Mammary epithelial cell (primary cell): ENCODE measurements at regions of chr5 and their contacts with region 1.

Region 1: GRCh38 chr5:181005791-181006190 is 17.1 kb downstream of the BTNL3 start:
- DNase-seq: no peak
- H3K4me3 ChIP-seq: no peak overlapping the region
- H3K27ac ChIP-seq: no peak overlapping the region
- H3K4me1 ChIP-seq: no peaks in the 10 kb centered on the region
- H3K27me3 ChIP-seq: no peaks in the 10 kb centered on the region
- CTCF ChIP-seq: no peak

Region 2: GRCh38 chr5:180908998-180909731 is 96.6 kb before region 1 on chr5:
- CTCF ChIA-PET with region 1: no interaction called
- dilution Hi-C with region 1: no loop called
- in situ Hi-C with region 1: no loop called
- intact Hi-C with region 1: no loop called
- DNase-seq: no peak
- H3K4me3 ChIP-seq: no peak overlapping the region
- H3K27ac ChIP-seq: no peak overlapping the region
- H3K4me1 ChIP-seq: no peaks in the 10 kb centered on the region
- H3K27me3 ChIP-seq: no peaks in the 10 kb centered on the region
- CTCF ChIP-seq: no peak

Region 3: DNA sequence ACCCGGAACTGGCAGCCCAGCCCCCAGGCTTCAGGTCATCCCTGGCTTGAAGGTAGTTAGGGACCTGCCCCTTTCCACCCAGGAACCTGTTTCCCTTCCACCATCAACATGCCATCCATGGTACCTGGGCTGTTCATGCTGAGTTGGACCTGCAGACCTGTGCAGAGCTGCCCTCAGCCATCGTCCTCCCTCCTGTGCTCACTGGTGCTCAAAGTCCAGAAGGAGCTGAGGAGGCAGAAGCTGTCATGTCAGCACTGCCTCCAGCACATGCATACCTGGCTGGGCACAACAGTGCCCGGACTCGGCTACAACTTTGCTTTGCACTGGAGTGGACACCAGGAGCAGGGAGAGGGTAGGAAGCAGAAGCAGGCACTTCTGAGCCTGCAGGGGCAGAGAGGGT is 70.6 kb before region 1 on chr5:
- CTCF ChIA-PET with region 1: no interaction called
- dilution Hi-C with region 1: no loop called
- in situ Hi-C with region 1: no loop called
- intact Hi-C with region 1: no loop called
- DNase-seq: no peak
- H3K4me3 ChIP-seq: no peak overlapping the region
- H3K27ac ChIP-seq: no peak overlapping the region
- H3K4me1 ChIP-seq: no peaks in the 10 kb centered on the region
- H3K27me3 ChIP-seq: no peaks in the 10 kb centered on the region
- CTCF ChIP-seq: no peak

Region 4: DNA sequence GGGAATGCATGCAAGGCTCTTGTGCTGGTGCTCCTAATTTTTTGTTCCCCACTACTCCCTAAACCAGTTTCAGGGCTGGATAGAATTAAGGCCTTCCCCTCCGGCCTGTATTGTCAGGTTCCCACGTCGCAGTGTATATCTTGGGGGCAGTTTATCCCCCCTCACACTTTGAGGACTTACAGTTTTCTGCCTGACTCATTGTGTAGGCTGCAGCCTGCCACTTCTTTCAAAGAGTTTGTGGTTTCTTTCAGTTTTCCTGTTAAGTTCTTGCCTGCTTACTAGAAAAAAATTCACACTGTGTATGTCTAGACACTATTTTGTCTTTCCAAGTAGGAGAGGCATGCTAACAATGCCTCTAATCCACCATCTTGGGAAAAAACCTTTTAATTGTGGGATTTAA is 45.6 kb before region 1 on chr5:
- CTCF ChIA-PET with region 1: no interaction called
- dilution Hi-C with region 1: loop called (anchors 5 kb)
- in situ Hi-C with region 1: no loop called
- intact Hi-C with region 1: no loop called
- DNase-seq: no peak
- H3K4me3 ChIP-seq: no peak overlapping the region
- H3K27ac ChIP-seq: no peak overlapping the region
- H3K4me1 ChIP-seq: no peaks in the 10 kb centered on the region
- H3K27me3 ChIP-seq: no peaks in the 10 kb centered on the region
- CTCF ChIP-seq: no peak

Region 5: GRCh38 chr5:180990086-180990881 is 15.5 kb before region 1 on chr5:
- CTCF ChIA-PET with region 1: no interaction called
- dilution Hi-C with region 1: no loop called
- in situ Hi-C with region 1: no loop called
- intact Hi-C with region 1: no loop called
- DNase-seq: no peak
- H3K4me3 ChIP-seq: no peak overlapping the region
- H3K27ac ChIP-seq: no peak overlapping the region
- H3K4me1 ChIP-seq: no peaks in the 10 kb centered on the region
- H3K27me3 ChIP-seq: no peaks in the 10 kb centered on the region
- CTCF ChIP-seq: no peak

Region 6: GRCh38 chr5:181052672-181053487 is 47.1 kb after region 1 on chr5:
- CTCF ChIA-PET with region 1: no interaction called
- dilution Hi-C with region 1: no loop called
- in situ Hi-C with region 1: no loop called
- intact Hi-C with region 1: no loop called
- DNase-seq: no peak
- H3K4me3 ChIP-seq: peak overlapping the region in 2 of 3 experiments; percentile 40 to 51
- H3K27ac ChIP-seq: no peak overlapping the region
- H3K4me1 ChIP-seq: peaks cover 9% of the 10 kb centered on the region
- H3K27me3 ChIP-seq: peaks cover 27% of the 10 kb centered on the region
- CTCF ChIP-seq: no peak